ENCODE measurements at regions of chr18 and their contacts with region 1.

Region 1: DNA sequence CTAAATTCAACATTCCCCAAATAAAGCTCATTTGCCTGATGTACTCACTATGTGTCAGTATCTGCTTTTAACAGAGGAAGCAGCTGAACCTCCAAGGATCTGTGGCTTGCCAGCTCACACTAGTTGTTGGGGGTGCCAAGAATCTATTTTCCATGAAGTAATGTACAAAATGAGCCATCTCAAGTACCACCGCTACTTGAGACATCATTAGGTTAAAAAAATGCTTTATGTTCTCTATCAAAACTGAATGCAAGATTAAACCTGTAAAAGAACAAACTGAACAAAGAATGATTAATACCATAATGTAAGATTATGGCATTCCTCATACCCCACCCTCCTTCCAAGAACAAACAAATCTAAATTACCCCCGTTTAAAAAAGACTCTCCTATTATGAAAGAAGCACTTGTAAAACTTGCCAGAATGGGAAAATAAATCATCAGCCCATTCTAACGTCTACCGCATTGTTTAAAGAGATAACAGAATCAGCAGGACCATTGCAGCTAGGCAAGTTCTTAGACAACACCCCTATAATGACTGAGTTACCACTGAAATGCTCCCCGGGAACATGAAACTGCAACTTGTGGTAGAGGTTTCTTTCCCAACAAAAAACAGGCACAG is 471.6 kb downstream of the DLGAP1 start:
- DNase-seq: peak; percentile 97
- H3K4me3 ChIP-seq: no peak overlapping the region
- H3K27ac ChIP-seq: peak overlapping the region; percentile 98
- H3K4me1 ChIP-seq: peaks cover 38% of the 10 kb centered on the region
- H3K27me3 ChIP-seq: no peaks in the 10 kb centered on the region
- CTCF ChIP-seq: no peak

Region 2: GRCh38 chr18:3593904-3594661 is 389.4 kb before region 1 on chr18:
- CTCF ChIA-PET with region 1: no interaction called
- dilution Hi-C with region 1: no loop called
- in situ Hi-C with region 1: no loop called
- intact Hi-C with region 1: loop called (anchors 10 kb)
- DNase-seq: peak; percentile 87
- H3K4me3 ChIP-seq: peak overlapping the region; percentile 45 to 56 (median 53)
- H3K27ac ChIP-seq: peak overlapping the region; percentile 99
- H3K4me1 ChIP-seq: peaks cover 49% of the 10 kb centered on the region
- H3K27me3 ChIP-seq: no peaks in the 10 kb centered on the region
- CTCF ChIP-seq: peak; percentile 92 to 95

Region 3: GRCh38 chr18:3790703-3791102 is 192.8 kb before region 1 on chr18:
- CTCF ChIA-PET with region 1: no interaction called
- dilution Hi-C with region 1: no loop called
- in situ Hi-C with region 1: no loop called
- intact Hi-C with region 1: no loop called
- DNase-seq: no peak
- H3K4me3 ChIP-seq: no peak overlapping the region
- H3K27ac ChIP-seq: no peak overlapping the region
- H3K4me1 ChIP-seq: peaks cover 32% of the 10 kb centered on the region
- H3K27me3 ChIP-seq: no peaks in the 10 kb centered on the region
- CTCF ChIP-seq: no peak

Region 4: GRCh38 chr18:3869848-3870247 is 113.6 kb before region 1 on chr18:
- CTCF ChIA-PET with region 1: no interaction called
- dilution Hi-C with region 1: no loop called
- in situ Hi-C with region 1: loop called in 1 of 2 experiments (anchors 10 kb)
- intact Hi-C with region 1: no loop called
- DNase-seq: peak; percentile 37
- H3K4me3 ChIP-seq: no peak overlapping the region
- H3K27ac ChIP-seq: no peak overlapping the region
- H3K4me1 ChIP-seq: no peaks in the 10 kb centered on the region
- H3K27me3 ChIP-seq: peaks cover 1% of the 10 kb centered on the region
- CTCF ChIP-seq: peak; percentile 46 to 59

Region 5: DNA sequence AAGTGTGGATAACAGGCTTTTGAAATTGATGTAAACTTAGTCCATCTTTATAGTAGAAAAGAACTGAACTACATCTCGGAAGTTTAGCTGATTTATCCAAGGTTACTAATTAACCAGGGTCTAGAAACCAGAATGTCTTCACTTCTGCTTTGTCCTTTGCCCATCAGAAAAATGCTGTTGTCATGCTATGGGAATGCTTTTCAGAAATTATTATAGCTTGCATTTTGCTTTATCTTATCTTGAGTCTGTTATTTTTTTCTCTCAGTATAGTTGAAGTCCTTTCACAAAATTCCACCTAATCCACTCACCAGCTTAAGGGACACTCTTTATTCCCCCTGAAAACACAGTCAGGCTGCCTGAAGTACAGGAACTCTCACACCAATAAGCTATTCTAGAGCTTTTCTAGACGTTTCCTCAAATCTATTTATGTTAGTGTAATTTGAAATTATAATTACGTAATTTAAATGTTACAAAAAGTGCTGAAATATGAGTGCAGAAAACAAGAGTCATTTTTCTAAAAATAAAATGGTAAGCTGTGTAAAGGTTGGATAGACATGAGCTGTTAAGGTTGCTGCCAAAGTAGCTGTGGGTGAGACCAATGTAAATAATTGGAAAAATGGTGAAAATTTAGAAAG is 77.2 kb before region 1 on chr18:
- CTCF ChIA-PET with region 1: no interaction called
- dilution Hi-C with region 1: no loop called
- in situ Hi-C with region 1: no loop called
- intact Hi-C with region 1: loop called (anchors 5 kb)
- DNase-seq: no peak
- H3K4me3 ChIP-seq: no peak overlapping the region
- H3K27ac ChIP-seq: no peak overlapping the region
- H3K4me1 ChIP-seq: peaks cover 17% of the 10 kb centered on the region
- H3K27me3 ChIP-seq: no peaks in the 10 kb centered on the region
- CTCF ChIP-seq: no peak

Region 6: DNA sequence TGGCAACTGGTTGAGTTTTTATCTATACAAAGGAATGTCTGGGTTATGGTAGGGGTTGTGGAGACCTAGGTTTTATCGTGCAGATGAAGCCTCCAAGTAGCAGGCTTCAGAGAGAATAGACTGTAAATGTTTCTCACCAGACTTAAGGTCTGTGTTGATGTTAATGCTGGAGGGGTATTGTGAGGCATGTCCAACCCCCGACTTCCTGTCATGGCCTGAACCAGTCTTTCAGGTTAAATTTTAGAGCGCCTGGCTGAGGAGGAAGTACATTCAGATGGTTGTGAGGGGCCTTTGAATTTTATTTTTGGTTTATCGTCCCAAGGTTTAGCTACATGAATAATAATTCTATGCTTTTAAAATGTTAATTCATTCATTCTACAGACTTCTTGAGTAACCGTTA is 36.6 kb after region 1 on chr18:
- CTCF ChIA-PET with region 1: no interaction called
- dilution Hi-C with region 1: no loop called
- in situ Hi-C with region 1: no loop called
- intact Hi-C with region 1: no loop called
- DNase-seq: no peak
- H3K4me3 ChIP-seq: no peak overlapping the region
- H3K27ac ChIP-seq: no peak overlapping the region
- H3K4me1 ChIP-seq: no peaks in the 10 kb centered on the region
- H3K27me3 ChIP-seq: no peaks in the 10 kb centered on the region
- CTCF ChIP-seq: no peak

Measured in mammary epithelial cell (primary cell).